Caco-2 (cell line): ENCODE measurements at regions of chr12 and their contacts with region 1.

Region 1: GRCh38 chr12:56189176-56189917 is at the start of gene SMARCC2:
- DNase-seq: peak; percentile 92 to 94
- H3K4me3 ChIP-seq: peak within 1 kb of the TSS; percentile 49
- H3K4me3 Mint-ChIP-seq: peak within 1 kb of the TSS; percentile 97
- H3K27ac Mint-ChIP-seq: peak within 1 kb of the TSS; percentile 98
- H3K4me1 ChIP-seq: peaks cover 19% of the 10 kb centered on the region
- H3K4me1 Mint-ChIP-seq: peaks cover 30% of the 10 kb centered on the region
- H3K27me3 ChIP-seq: no peaks in the 10 kb centered on the region
- H3K27me3 Mint-ChIP-seq: peaks cover 3% of the 10 kb centered on the region
- CTCF ChIP-seq: peak; percentile 73 to 74
- total RNA-seq, gene SMARCC2: 89.1 and 94.8 TPM in 2 replicates

Region 2: GRCh38 chr12:55760663-55761062 is 428.7 kb before region 1 on chr12:
- CTCF ChIA-PET with region 1: no interaction called
- POLR2A ChIA-PET with region 1: no interaction called
- intact Hi-C with region 1: no loop called
- DNase-seq: no peak
- H3K4me3 ChIP-seq: no peak overlapping the region
- H3K4me3 Mint-ChIP-seq: no peak overlapping the region
- H3K27ac Mint-ChIP-seq: no peak overlapping the region
- H3K4me1 ChIP-seq: no peaks in the 10 kb centered on the region
- H3K4me1 Mint-ChIP-seq: no peaks in the 10 kb centered on the region
- H3K27me3 ChIP-seq: no peaks in the 10 kb centered on the region
- H3K27me3 Mint-ChIP-seq: no peaks in the 10 kb centered on the region
- CTCF ChIP-seq: no peak

Region 3: DNA sequence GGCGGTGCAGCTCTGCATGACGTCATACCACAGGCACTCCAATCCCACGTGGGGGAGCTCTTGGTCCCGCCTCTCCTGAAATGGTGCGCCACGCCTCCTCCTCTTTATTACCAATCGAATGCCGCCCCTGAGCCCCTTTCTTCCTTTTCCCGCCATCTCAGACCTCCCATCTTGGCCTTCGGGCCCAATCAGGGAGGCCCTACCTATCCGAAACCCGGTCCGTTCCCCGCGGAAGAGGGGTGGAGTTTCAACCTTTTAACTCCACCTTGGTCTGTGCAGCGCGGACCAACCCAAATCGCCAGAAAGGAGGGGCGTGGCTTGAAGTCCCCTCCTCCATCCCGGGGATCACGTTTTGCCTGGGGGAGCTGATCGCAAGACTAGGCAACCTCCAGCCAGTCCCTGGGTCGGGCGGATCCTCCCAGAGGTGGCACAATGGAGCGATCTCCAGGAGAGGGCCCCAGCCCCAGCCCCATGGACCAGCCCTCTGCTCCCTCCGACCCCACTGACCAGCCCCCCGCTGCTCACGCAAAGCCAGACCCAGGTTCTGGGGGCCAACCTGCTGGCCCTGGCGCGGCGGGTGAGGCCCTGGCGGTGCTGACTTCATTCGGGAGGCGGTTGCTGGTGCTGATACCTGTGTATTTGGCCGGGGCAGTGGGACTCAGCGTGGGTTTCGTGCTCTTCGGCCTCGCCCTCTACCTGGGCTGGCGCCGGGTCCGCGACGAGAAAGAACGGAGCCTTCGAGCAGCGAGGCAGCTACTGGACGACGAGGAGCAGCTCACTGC is 61.3 kb before region 1 on chr12 and contains the start of gene ESYT1:
- CTCF ChIA-PET with region 1: interaction called, 31 read pairs
- POLR2A ChIA-PET with region 1: interaction called, 19 read pairs
- intact Hi-C with region 1: loop called (anchors 2 kb)
- DNase-seq: peak; percentile 99
- H3K4me3 ChIP-seq: peak within 1 kb of the TSS; percentile 75
- H3K4me3 Mint-ChIP-seq: peak within 1 kb of the TSS; percentile 89
- H3K27ac Mint-ChIP-seq: peak within 1 kb of the TSS; percentile 91
- H3K4me1 ChIP-seq: peaks cover 29% of the 10 kb centered on the region
- H3K4me1 Mint-ChIP-seq: peaks cover 35% of the 10 kb centered on the region
- H3K27me3 ChIP-seq: no peaks in the 10 kb centered on the region
- H3K27me3 Mint-ChIP-seq: no peaks in the 10 kb centered on the region
- CTCF ChIP-seq: no peak
- total RNA-seq, gene ESYT1: 70.4 and 79.0 TPM in 2 replicates

Region 4: DNA sequence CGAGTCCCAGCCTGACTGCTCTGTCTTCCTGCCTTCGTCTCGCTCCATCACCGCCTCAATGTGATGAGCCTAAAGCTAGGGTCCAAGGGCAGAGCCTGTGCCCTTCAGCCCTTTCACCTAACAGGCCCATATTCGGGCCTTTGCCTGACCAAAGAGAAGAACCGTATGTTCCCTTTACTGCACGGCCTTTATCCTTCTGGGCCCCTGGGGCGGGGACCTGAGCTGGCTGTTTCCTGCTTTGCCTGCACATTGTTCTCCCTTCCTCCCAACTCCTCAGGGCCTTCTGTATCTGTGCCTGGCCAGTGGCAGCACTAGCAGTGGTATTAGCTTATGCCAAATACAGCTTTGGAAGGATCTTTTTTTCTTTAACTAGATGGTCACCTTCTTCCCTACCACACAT is 45.5 kb before region 1 on chr12:
- CTCF ChIA-PET with region 1: no interaction called
- POLR2A ChIA-PET with region 1: no interaction called
- intact Hi-C with region 1: no loop called
- DNase-seq: no peak
- H3K4me3 ChIP-seq: no peak overlapping the region
- H3K4me3 Mint-ChIP-seq: no peak overlapping the region
- H3K27ac Mint-ChIP-seq: no peak overlapping the region
- H3K4me1 ChIP-seq: no peaks in the 10 kb centered on the region; the same call in 1 of the 2 replicates
- H3K4me1 Mint-ChIP-seq: no peaks in the 10 kb centered on the region
- H3K27me3 ChIP-seq: no peaks in the 10 kb centered on the region
- H3K27me3 Mint-ChIP-seq: no peaks in the 10 kb centered on the region
- CTCF ChIP-seq: no peak

Region 5: GRCh38 chr12:56158029-56158925 is 31.1 kb before region 1 on chr12 and contains the start of gene MYL6:
- CTCF ChIA-PET with region 1: interaction called, 7 read pairs
- POLR2A ChIA-PET with region 1: interaction called, 7 read pairs
- intact Hi-C with region 1: loop called (anchors 1 kb)
- DNase-seq: peak; percentile 96 to 98
- H3K4me3 ChIP-seq: peak within 1 kb of the TSS; percentile 59
- H3K4me3 Mint-ChIP-seq: peak within 1 kb of the TSS; percentile 79
- H3K27ac Mint-ChIP-seq: peak within 1 kb of the TSS; percentile 88
- H3K4me1 ChIP-seq: peaks cover 16% of the 10 kb centered on the region
- H3K4me1 Mint-ChIP-seq: peaks cover 33% of the 10 kb centered on the region
- H3K27me3 ChIP-seq: no peaks in the 10 kb centered on the region
- H3K27me3 Mint-ChIP-seq: no peaks in the 10 kb centered on the region
- CTCF ChIP-seq: no peak
- total RNA-seq, gene MYL6: 960 and 1,174 TPM in 2 replicates

Region 6: GRCh38 chr12:56206457-56207166 is 17.3 kb after region 1 on chr12:
- CTCF ChIA-PET with region 1: interaction called, 10 read pairs
- POLR2A ChIA-PET with region 1: interaction called, 8 read pairs
- intact Hi-C with region 1: no loop called
- DNase-seq: peak; percentile 72 to 77
- H3K4me3 ChIP-seq: no peak overlapping the region
- H3K4me3 Mint-ChIP-seq: no peak overlapping the region
- H3K27ac Mint-ChIP-seq: no peak overlapping the region
- H3K4me1 ChIP-seq: no peaks in the 10 kb centered on the region
- H3K4me1 Mint-ChIP-seq: no peaks in the 10 kb centered on the region
- H3K27me3 ChIP-seq: no peaks in the 10 kb centered on the region
- H3K27me3 Mint-ChIP-seq: no peaks in the 10 kb centered on the region
- CTCF ChIP-seq: peak; percentile 61 to 78

Region 7: GRCh38 chr12:56258057-56258819 is 68.9 kb after region 1 on chr12 and contains the start of gene ANKRD52:
- CTCF ChIA-PET with region 1: interaction called, 13 read pairs
- POLR2A ChIA-PET with region 1: no interaction called
- intact Hi-C with region 1: loop called (anchors 2 kb)
- DNase-seq: peak; percentile 50 to 88
- H3K4me3 ChIP-seq: peak within 1 kb of the TSS; percentile 72
- H3K4me3 Mint-ChIP-seq: peak within 1 kb of the TSS; percentile 74
- H3K27ac Mint-ChIP-seq: peak within 1 kb of the TSS; percentile 56
- H3K4me1 ChIP-seq: peaks cover 38% of the 10 kb centered on the region
- H3K4me1 Mint-ChIP-seq: peaks cover 30% of the 10 kb centered on the region
- H3K27me3 ChIP-seq: no peaks in the 10 kb centered on the region
- H3K27me3 Mint-ChIP-seq: no peaks in the 10 kb centered on the region
- CTCF ChIP-seq: peak; percentile 50 to 59
- total RNA-seq, gene ANKRD52: 34.6 and 46.3 TPM in 2 replicates

Region 8: DNA sequence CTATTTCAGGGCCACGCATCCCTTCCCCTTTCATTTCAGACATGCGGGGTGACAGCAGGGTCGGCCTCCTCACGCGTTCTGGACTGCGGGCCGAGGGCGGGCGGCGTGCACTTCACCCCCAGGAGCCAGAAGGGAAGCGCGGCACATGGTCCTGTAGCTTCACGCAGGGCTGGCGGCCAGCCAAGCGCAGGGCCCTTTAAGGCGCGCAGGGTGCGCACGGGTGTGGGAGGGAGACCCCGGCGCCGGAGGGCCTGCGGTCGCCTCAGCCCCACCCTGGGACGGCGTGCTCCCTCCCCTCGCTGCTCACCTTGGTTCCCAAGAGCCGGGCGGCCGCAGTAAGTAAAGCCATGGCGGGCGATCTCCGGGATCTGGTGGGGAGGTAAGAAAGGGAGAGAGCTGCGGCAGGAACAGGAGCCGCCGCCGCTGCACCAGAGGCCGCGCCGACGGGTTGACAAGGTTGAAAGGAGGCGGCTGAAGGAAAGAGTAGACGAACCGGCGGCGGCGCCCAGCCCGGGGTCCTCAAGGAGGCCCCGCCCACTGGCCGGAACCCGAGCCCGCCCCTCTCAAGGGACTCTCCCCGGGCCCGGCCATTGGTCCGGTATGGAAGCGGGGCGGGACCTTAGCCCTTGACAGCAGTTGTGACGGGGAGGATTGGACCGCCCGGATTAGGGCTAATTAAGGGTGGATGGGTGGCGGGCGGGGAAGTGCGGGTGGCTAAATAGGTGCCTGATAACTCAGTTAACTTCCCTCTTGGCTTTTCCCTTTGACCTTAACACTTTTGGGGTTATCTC is 110.7 kb after region 1 on chr12 and contains the start of gene CS:
- CTCF ChIA-PET with region 1: no interaction called
- POLR2A ChIA-PET with region 1: no interaction called
- intact Hi-C with region 1: loop called (anchors 2 kb)
- DNase-seq: peak; percentile 99
- H3K4me3 ChIP-seq: peak within 1 kb of the TSS; percentile 63
- H3K4me3 Mint-ChIP-seq: peak within 1 kb of the TSS; percentile 94
- H3K27ac Mint-ChIP-seq: peak within 1 kb of the TSS; percentile 95
- H3K4me1 ChIP-seq: peaks cover 10% of the 10 kb centered on the region
- H3K4me1 Mint-ChIP-seq: peaks cover 17% of the 10 kb centered on the region
- H3K27me3 ChIP-seq: no peaks in the 10 kb centered on the region
- H3K27me3 Mint-ChIP-seq: no peaks in the 10 kb centered on the region
- CTCF ChIP-seq: no peak
- total RNA-seq, gene CS: 241 and 263 TPM in 2 replicates